Activated CD4-positive, alpha-beta T cell treated with anti-CD3 and anti-CD28 coated beads, Interleukin-2, amount 10 ng/mL, durations not matched to agents 24 days and 14 days (primary cell): ENCODE measurements at regions of chr17 and their contacts with region 1.

Region 1: GRCh38 chr17:6666077-6666521 is 14.5 kb downstream of the C17orf100 start:
- DNase-seq: peak; percentile 84
- H3K4me3 Mint-ChIP-seq: no peak overlapping the region
- H3K27ac Mint-ChIP-seq: no peak overlapping the region
- H3K4me1 Mint-ChIP-seq: peaks cover 14% of the 10 kb centered on the region
- H3K27me3 Mint-ChIP-seq: peaks cover 18% of the 10 kb centered on the region

Region 2: DNA sequence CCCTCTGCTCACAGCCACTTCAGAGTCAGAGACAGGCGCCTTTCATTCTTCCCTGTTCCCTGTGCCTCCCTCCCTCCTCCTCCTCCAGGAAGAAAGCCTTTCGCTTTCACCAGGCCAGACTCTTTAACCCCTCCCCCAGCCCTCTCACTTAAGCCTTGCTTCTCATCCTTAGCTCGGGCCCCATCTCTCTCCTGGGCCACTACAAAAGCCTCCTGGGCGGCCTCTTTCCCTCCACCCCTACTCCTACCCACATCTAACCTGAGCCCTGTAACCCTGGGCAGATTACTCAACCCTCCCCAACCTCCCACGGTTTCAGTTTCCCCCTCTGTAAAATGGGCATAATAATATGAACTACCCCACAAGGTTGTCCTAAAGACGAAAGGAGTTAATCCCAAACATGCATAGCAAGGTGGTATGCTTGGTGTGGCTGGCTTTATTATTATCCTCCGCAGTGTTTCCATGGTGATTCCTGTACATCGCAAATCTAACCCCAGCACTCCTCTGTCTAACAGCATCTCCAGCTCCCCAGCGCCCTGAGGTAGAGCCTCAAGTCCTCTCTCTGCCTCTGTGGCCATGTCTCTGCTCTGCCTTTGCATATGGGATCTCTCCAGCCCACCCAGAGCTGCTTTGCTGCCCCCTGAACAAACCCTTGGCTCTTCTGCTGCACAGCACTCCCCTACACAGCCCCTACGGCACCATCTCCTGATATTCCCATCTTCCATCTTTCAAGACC is 204.1 kb before region 1 on chr17:
- intact Hi-C with region 1: no loop called
- DNase-seq: no peak
- H3K4me3 Mint-ChIP-seq: no peak overlapping the region
- H3K27ac Mint-ChIP-seq: no peak overlapping the region
- H3K4me1 Mint-ChIP-seq: peaks cover 16% of the 10 kb centered on the region
- H3K27me3 Mint-ChIP-seq: peaks cover 6% of the 10 kb centered on the region

Region 3: GRCh38 chr17:6753006-6753445 is 86.9 kb after region 1 on chr17:
- intact Hi-C with region 1: loop called (anchors 10 kb)
- DNase-seq: no peak
- H3K4me3 Mint-ChIP-seq: peak overlapping the region; percentile 17
- H3K27ac Mint-ChIP-seq: peak overlapping the region; percentile 57
- H3K4me1 Mint-ChIP-seq: peaks cover 38% of the 10 kb centered on the region
- H3K27me3 Mint-ChIP-seq: peaks cover 17% of the 10 kb centered on the region

Region 4: GRCh38 chr17:6831661-6832263 is 165.7 kb after region 1 on chr17 and contains the start of gene TEKT1:
- intact Hi-C with region 1: loop called (anchors 5 kb)
- DNase-seq: peak; percentile 93
- H3K4me3 Mint-ChIP-seq: peak within 1 kb of the TSS; percentile 81
- H3K27ac Mint-ChIP-seq: no peak within 1 kb of the TSS
- H3K4me1 Mint-ChIP-seq: peaks cover 9% of the 10 kb centered on the region
- H3K27me3 Mint-ChIP-seq: peaks cover 63% of the 10 kb centered on the region
- total RNA-seq, gene TEKT1: not detected in 2 replicates